ENCODE measurements at regions of chr3 and their contacts with region 1.

Region 1: DNA sequence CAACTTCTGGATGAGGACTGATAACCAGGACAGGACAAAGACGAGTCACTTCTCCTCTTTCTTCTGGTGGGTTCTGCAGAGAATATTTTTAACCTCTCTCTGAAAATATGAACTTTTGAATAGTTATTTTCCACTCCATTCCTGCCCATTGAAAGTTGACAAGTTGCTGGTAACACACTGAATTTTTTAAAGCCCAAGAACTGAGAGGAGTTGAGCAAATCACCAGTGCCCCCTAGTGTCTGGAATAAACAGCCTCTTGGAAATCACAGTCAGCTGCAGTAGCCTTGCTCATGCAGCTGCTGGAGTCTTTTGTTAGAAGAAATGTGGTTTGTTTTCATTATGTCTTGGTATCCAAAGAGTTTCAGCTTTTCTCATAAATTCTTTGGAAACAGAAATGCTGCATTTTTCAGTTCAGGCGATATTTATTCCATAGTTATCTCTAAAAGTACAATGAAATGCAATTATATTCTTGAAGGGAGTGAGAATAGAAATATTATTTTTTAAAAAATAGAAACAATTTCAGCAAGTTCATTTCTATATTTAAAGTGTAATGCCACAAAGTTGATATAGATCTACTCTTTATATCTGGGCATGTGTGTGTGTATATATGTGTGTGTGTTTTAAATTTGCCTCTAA is 741.0 kb upstream of the CBLB start:
- DNase-seq: peak; percentile 78
- ATAC-seq: peak; percentile 81
- H3K4me3 Mint-ChIP-seq: no peak overlapping the region
- H3K27ac Mint-ChIP-seq: peak overlapping the region; percentile 81
- H3K4me1 Mint-ChIP-seq: peaks cover 29% of the 10 kb centered on the region
- H3K27me3 Mint-ChIP-seq: peaks cover 4% of the 10 kb centered on the region

Region 2: GRCh38 chr3:105527949-105528348 is 1081.8 kb before region 1 on chr3:
- CTCF ChIA-PET with region 1: no interaction called
- POLR2A ChIA-PET with region 1: no interaction called
- intact Hi-C with region 1: loop called in 1 of 2 experiments (anchors 10 kb)
- DNase-seq: peak; percentile 45
- ATAC-seq: peak; percentile 96
- H3K4me3 Mint-ChIP-seq: no peak overlapping the region
- H3K27ac Mint-ChIP-seq: no peak overlapping the region
- H3K4me1 Mint-ChIP-seq: peaks cover 17% of the 10 kb centered on the region
- H3K27me3 Mint-ChIP-seq: no peaks in the 10 kb centered on the region

Region 3: DNA sequence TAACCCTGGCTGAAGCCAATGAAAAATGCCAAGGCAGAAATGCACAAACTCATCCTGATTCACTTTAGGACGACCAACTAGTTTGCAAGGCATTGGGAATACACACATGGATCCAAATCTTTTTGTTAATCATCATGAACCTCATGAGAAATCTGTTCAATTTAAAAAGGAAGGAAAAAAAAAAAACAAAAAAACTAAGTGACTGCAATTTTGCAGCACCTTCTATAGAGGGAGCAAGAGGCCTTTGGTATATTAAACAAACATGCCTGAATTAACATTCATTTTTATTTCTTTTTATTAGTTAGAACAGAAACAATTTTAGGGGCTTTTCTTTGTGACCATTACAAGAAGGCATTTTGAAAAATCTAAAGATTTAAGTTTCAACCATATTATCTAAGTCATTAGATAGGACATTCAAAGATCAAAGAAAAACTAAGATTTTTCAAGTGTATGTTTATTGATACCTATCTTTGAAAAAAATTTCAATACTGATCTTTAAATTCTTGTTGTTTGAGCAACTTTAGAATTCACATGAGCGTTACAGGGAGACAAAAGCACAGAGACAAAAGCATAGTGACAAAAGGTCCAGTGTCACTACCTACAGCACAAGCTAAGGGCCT is 923.4 kb before region 1 on chr3:
- CTCF ChIA-PET with region 1: interaction called, 4 read pairs
- POLR2A ChIA-PET with region 1: no interaction called
- intact Hi-C with region 1: loop called (anchors 1 to 2 kb)
- DNase-seq: no peak
- ATAC-seq: no peak
- H3K4me3 Mint-ChIP-seq: no peak overlapping the region
- H3K27ac Mint-ChIP-seq: peak overlapping the region; percentile 42
- H3K4me1 Mint-ChIP-seq: peaks cover 24% of the 10 kb centered on the region
- H3K27me3 Mint-ChIP-seq: no peaks in the 10 kb centered on the region

Region 4: DNA sequence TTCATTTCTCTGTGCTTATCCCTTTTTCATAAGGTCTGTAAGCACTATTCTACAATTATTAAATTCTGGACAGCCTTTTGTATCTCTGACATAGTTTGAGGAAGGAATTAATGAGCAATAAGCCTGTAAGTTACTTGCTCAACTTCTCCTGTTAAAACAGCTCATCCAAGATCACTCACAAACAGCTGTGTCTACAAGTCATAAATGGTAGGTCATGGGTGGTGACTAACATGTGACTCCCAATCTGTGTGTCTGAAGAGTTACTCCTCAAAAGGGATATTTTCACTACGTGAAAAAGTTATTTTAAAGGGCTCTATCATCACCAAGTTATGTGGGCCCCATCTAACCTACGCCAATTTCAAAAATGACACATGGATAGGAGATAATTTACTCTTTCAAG is 595.8 kb before region 1 on chr3:
- CTCF ChIA-PET with region 1: interaction called, 3 read pairs
- POLR2A ChIA-PET with region 1: no interaction called
- intact Hi-C with region 1: loop called (anchors 1 to 5 kb)
- DNase-seq: peak; percentile 19
- ATAC-seq: peak; percentile 72
- H3K4me3 Mint-ChIP-seq: no peak overlapping the region
- H3K27ac Mint-ChIP-seq: peak overlapping the region; percentile 68
- H3K4me1 Mint-ChIP-seq: peaks cover 50% of the 10 kb centered on the region
- H3K27me3 Mint-ChIP-seq: no peaks in the 10 kb centered on the region

Region 5: GRCh38 chr3:106428565-106428994 is 181.2 kb before region 1 on chr3:
- CTCF ChIA-PET with region 1: interaction called, 8 read pairs
- POLR2A ChIA-PET with region 1: interaction called, 3 read pairs
- intact Hi-C with region 1: loop called (anchors 2 kb)
- DNase-seq: peak; percentile 73
- ATAC-seq: peak; percentile 82
- H3K4me3 Mint-ChIP-seq: no peak overlapping the region
- H3K27ac Mint-ChIP-seq: peak overlapping the region; percentile 98
- H3K4me1 Mint-ChIP-seq: peaks cover 49% of the 10 kb centered on the region
- H3K27me3 Mint-ChIP-seq: no peaks in the 10 kb centered on the region

Region 6: GRCh38 chr3:106482451-106482850 is 127.3 kb before region 1 on chr3:
- CTCF ChIA-PET with region 1: interaction called, 3 read pairs
- POLR2A ChIA-PET with region 1: no interaction called
- intact Hi-C with region 1: loop called in 1 of 2 experiments (anchors 2 kb)
- DNase-seq: no peak
- ATAC-seq: no peak
- H3K4me3 Mint-ChIP-seq: no peak overlapping the region
- H3K27ac Mint-ChIP-seq: no peak overlapping the region
- H3K4me1 Mint-ChIP-seq: no peaks in the 10 kb centered on the region
- H3K27me3 Mint-ChIP-seq: peaks cover 2% of the 10 kb centered on the region

Region 7: DNA sequence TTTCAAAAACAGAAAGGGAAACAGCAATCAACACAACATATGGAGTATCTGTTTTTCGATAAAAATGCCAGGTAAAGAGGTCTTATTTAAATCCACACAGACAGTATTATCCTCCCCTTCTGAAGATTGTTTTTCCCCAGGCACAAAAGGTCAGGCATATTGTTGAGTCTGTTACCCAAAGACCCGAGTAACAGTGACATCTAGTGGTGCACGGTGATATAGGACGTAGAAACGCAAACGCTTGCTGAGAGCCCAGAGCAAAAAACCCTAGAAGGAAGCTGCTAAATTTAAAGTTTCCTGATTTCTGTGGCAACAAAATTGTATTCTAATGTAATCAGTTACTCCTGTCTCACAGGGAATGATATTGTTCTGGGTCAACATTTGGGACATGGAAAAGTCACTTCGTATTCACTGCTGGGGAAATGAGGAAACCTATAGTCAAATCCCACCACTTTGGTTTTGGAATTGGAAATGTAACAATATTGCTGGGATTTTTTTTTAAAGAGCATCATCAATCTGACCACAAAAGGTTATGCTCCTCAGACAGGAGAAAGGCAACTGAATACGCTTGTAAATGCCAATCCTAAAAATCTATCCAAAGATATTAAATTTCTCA is 454.8 kb after region 1 on chr3:
- CTCF ChIA-PET with region 1: interaction called, 3 read pairs
- POLR2A ChIA-PET with region 1: no interaction called
- intact Hi-C with region 1: loop called (anchors 10 kb)
- DNase-seq: peak; percentile 80
- ATAC-seq: peak; percentile 85
- H3K4me3 Mint-ChIP-seq: no peak overlapping the region
- H3K27ac Mint-ChIP-seq: no peak overlapping the region
- H3K4me1 Mint-ChIP-seq: peaks cover 19% of the 10 kb centered on the region
- H3K27me3 Mint-ChIP-seq: peaks cover 8% of the 10 kb centered on the region